Head of caudate nucleus (tissue), 42 donors: ENCODE measurements at regions of chr1 and their contacts with region 1.

Region 1: DNA sequence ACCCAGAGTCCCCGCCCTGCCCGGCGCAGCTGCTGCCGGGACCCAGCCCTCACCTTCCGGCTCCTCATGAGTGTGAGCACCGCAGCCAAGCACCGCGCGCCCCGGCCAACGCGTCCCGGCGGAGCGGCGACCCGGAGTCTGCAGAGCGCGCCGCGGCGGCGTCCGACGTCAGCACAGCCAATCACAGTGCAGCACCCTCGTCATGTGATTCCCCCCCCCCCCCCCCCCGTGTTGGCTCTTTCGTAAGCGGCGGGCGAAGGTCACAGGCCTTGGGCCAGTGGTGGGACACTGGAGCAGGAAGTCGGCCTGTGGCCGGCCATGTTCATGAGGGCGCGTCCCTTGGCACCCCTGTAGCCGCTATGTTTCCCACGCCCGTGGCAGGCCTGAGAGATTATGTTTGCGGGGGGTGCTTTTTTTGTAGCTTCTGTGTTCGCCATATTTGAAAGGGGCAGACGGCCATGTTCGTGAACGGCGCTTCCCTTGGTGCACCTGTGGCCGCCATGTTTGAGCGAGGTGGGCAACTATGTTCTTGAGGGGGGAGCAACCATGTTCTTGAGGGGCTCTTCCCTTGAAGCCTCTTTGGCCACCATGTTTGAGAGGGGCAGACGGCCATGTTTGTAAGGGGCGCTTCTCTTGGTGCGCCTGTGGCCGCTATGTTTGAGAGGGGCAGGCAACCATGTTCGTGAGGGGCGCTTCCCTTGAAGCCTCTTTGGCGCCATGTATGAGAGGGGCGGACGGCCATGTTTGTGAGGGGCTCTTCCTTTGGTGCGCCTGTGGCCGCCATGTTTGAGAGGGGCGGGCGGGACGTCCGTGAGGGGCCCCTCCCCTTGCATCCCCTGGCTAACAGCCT is at the start of gene C1orf174:
- DNase-seq: peak; percentile 87 to 99 (median 96)

Region 2: DNA sequence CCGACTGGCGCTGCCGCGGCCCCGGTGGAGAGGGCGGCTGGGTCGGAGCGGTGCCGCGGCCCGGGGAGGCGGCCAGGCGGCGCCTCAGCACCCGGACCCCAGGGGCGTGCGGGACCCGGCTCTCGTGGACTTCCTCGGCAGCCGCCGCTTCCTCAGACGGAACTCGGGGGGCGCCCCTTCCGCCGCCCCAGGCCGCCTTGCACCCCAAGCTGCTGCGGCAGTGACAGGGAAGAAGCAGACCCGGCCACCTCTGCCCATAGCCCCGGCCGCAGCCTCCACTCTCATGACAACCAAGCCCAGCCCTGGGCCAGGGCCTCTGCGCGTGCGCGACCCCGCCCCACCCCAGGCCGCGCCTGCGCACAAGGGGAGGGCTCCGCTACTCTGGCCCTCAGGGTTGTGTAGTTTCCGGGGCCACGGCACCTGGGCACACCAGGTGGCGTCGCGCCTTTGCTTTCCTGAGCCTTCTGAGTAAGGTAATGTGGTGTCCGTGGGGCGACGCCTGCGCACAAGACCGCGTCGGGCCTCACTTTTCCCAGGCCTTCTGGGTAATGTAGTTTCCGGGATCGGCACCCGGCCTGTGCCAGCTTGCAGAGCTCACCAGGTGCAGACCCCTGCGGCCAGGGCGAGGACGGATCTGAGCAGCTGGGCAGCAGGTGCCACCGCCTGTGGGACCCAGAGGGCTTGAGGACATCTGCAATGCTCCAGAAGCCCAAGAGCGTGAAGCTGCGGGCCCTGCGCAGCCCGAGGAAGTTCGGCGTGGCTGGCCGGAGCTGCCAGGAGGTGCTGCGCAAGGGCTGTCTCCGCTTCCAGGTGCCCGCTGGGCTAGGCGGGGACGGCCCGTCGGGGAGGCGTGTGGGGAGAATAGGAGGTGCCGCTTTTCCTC is 43.2 kb before region 1 on chr1 and contains the starts of genes CEP104 and DFFB:
- intact Hi-C with region 1: loop called (anchors 5 kb)
- DNase-seq: peak; percentile 81 to 95 (median 90)

Region 3: DNA sequence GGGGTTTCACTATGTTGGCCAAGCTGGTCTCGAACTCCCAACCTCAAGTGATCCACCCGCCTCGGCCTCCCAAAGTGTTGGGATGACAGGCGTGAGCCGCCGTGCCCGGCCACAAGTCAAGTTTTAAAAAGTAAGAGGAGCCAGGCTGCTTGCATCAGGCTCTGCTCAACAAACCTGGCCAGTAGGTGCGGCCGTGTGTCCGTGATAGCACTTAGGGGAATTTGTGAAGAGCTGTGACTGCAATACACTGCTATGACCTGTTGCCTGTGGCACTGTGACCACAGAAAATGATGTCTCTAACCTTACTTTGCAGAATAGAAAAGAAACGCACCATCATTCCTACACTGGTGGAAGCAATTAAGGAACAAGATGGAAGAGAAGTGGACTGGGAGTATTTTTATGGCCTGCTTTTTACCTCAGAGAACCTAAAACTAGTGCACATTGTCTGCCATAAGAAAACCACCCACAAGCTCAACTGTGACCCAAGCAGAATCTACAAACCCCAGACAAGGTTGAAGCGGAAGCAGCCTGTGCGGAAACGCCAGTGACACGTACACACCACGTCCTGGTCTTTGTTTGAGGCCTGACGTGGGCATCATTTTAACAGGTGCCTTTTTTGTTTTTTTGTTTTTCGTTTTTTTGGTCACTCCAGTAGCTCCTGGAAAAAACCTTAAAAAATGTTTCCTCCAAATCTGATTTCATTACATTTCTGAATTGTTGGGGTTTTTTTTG is 17.0 kb before region 1 on chr1:
- intact Hi-C with region 1: no loop called
- DNase-seq: no peak